ENCODE measurements at regions of chr6 and their contacts with region 1.

Region 1: DNA sequence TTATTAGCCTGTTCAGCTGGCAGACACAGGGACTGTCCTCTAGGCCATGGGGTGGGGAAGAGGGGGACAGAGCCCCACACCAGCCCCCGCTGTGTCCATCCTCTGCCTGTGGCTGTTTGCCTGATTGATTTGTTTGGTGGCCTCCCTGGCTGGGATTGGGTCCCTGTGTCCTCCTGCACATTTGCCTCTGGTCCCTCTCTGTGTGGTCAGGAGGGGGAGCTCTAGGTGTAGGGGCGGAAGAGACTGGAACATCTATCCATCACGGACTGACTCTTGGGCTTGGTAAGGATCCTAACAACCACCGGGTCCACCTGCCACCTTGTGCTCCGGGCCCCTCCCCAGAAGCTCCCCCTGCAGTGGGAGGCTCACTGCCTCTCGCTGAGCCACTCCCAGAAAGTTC is 38.4 kb upstream of the CCDC167 start:
- DNase-seq: peak; percentile 69
- CTCF ChIP-seq: peak; percentile 77

Region 2: GRCh38 chr6:37314487-37315156 is 223.5 kb before region 1 on chr6:
- CTCF ChIA-PET with region 1: no interaction called
- POLR2A ChIA-PET with region 1: no interaction called
- DNase-seq: peak; percentile 62
- CTCF ChIP-seq: peak; percentile 63

Region 3: GRCh38 chr6:37489660-37490361 is 48.3 kb before region 1 on chr6:
- CTCF ChIA-PET with region 1: interaction called, 20 read pairs
- POLR2A ChIA-PET with region 1: no interaction called
- DNase-seq: no peak
- CTCF ChIP-seq: peak; percentile 4

Region 4: GRCh38 chr6:37516076-37516919 is 21.8 kb before region 1 on chr6:
- CTCF ChIA-PET with region 1: interaction called, 13 read pairs
- POLR2A ChIA-PET with region 1: no interaction called
- DNase-seq: peak; percentile 84
- CTCF ChIP-seq: no peak

Region 5: DNA sequence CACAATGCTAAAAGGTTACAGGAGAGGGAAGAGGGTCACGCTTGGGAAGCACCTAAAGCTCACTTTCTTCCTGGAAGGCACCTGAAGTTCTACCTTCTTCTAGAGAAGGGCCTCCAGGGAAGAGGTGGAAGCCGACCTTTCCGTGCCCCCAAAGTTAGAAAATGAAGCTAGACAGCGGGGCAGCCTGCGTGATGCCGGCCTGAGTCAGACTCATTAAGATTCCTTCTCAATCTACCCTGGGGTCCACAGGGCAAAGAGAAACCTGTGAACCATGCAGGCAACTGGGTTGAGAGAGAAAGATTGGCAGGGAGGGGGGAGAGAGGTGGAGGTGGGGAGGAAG is 16.3 kb after region 1 on chr6:
- CTCF ChIA-PET with region 1: interaction called, 88 read pairs
- POLR2A ChIA-PET with region 1: interaction called, 3 read pairs
- DNase-seq: no peak
- CTCF ChIP-seq: no peak